Activated CD8-positive, alpha-beta T cell treated with anti-CD3 and anti-CD28 coated beads, Interleukin-2, amount 10 ng/mL, durations not matched to agents 7 days and 5 days (primary cell): ENCODE measurements at regions of chr9 and their contacts with region 1.

Region 1: DNA sequence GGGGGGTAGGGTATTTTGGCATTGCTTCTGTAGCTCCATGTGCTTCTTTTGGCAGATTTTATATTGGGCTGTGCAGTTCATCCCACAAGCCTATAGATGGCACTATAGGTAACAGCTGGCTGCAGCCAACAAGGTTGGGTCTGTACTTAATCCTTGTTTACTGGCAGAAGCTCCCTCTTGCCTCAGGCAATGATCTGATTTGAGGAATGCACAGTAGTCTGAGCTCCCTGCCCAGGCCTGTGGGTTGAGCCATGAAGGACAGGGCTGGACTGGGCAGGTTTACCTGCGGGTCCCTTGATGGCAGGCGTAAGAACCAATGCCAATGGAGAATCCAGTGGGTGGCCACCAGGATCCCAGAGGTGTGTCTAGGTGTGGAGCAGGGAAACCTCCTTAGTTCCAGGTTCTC is 11.7 kb upstream of the OR1J2 start:
- DNase-seq: peak; percentile 47
- ATAC-seq: peak; percentile 51
- H3K4me3 Mint-ChIP-seq: no peak overlapping the region
- H3K27ac Mint-ChIP-seq: no peak overlapping the region
- H3K4me1 Mint-ChIP-seq: no peaks in the 10 kb centered on the region
- H3K27me3 Mint-ChIP-seq: peaks cover 30% of the 10 kb centered on the region

Region 2: DNA sequence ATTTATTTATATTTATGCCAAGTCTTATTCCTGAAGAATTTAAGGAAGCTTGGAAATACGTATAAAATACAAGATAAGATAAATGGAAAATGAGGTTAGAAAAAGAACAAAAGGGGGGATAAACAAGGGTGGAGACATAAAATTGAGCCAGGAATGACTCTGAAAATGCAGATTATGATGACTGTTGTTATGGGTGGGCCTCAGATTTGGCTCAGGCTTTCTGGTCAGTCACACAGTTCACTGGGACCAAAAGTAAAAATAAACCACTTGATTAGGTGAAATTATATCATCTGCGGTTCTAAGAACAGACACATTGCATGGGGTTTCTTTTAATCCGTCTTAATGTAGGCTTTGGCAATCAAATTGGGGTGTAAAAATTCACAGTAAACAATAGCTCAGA is 72.2 kb before region 1 on chr9:
- CTCF ChIA-PET with region 1: no interaction called
- POLR2A ChIA-PET with region 1: no interaction called
- DNase-seq: no peak
- ATAC-seq: no peak
- H3K4me3 Mint-ChIP-seq: no peak overlapping the region
- H3K27ac Mint-ChIP-seq: no peak overlapping the region
- H3K4me1 Mint-ChIP-seq: no peaks in the 10 kb centered on the region
- H3K27me3 Mint-ChIP-seq: peaks cover 13% of the 10 kb centered on the region

Region 3: DNA sequence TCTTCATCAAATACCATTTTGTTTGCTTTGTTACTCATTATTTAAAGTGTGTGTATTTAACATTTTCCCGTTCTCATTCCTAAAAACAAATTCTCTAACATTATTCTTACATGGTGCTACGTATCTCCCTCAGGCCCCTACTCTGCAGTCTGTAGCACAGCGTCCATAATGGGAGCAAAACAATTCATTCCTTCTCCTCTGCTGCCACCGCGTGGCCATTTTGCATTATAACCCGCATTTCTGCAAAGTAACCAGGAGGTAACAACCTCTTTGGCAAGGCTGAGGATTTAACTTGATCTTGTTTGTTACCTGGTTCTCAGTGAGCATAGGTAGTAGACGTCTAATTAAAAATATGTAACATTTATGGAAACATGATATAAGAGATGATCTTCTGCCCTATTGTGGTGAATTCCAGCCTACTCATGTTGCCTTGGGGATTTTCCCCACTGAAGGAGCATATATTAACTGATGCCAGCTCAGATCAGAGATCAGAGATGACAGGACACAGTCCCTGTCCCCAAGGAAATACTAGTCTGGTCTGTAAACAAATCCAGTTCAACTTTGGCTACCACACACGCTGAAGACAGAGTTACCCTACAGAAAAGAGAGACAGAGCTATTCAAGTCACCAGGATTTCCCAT is 311.5 kb after region 1 on chr9:
- CTCF ChIA-PET with region 1: interaction called, 48 read pairs
- POLR2A ChIA-PET with region 1: no interaction called
- DNase-seq: peak; percentile 85
- ATAC-seq: peak; percentile 73
- H3K4me3 Mint-ChIP-seq: no peak overlapping the region
- H3K27ac Mint-ChIP-seq: no peak overlapping the region
- H3K4me1 Mint-ChIP-seq: peaks cover 34% of the 10 kb centered on the region
- H3K27me3 Mint-ChIP-seq: no peaks in the 10 kb centered on the region